BJ (cell line): ENCODE measurements at regions of chr10 and their contacts with region 1.

Region 1: GRCh38 chr10:76962851-76963250 is 674.8 kb downstream of the KCNMA1 start:
- DNase-seq: peak; percentile 40
- H3K4me3 ChIP-seq: no peak overlapping the region
- H3K27me3 ChIP-seq: no peaks in the 10 kb centered on the region
- CTCF ChIP-seq: no peak

Region 2: GRCh38 chr10:77274046-77274795 is 311.4 kb after region 1 on chr10:
- CTCF ChIA-PET with region 1: no interaction called
- POLR2A ChIA-PET with region 1: interaction called, 16 read pairs
- DNase-seq: peak; percentile 76
- H3K4me3 ChIP-seq: no peak overlapping the region
- H3K27me3 ChIP-seq: no peaks in the 10 kb centered on the region
- CTCF ChIP-seq: no peak